ENCODE measurements at regions of chr15 and their contacts with region 1.

Region 1: GRCh38 chr15:64216730-64217428 is 54.1 kb upstream of the PPIB start:
- DNase-seq: no peak
- CTCF ChIP-seq: no peak

Region 2: GRCh38 chr15:64070965-64071851 is 145.7 kb before region 1 on chr15:
- CTCF ChIA-PET with region 1: no interaction called
- POLR2A ChIA-PET with region 1: no interaction called
- DNase-seq: no peak
- CTCF ChIP-seq: no peak

Region 3: GRCh38 chr15:64180235-64180837 is 36.5 kb before region 1 on chr15:
- CTCF ChIA-PET with region 1: no interaction called
- POLR2A ChIA-PET with region 1: no interaction called
- DNase-seq: peak; percentile 54
- CTCF ChIP-seq: no peak

Region 4: GRCh38 chr15:64232400-64232799 is 15.5 kb after region 1 on chr15:
- CTCF ChIA-PET with region 1: interaction called, 12 read pairs
- POLR2A ChIA-PET with region 1: no interaction called
- DNase-seq: no peak
- CTCF ChIP-seq: no peak

Region 5: GRCh38 chr15:64315136-64315660 is 98.3 kb after region 1 on chr15:
- CTCF ChIA-PET with region 1: no interaction called
- POLR2A ChIA-PET with region 1: no interaction called
- DNase-seq: no peak
- CTCF ChIP-seq: no peak